ENCODE measurements at regions of chr10 and their contacts with region 1.

Region 1: GRCh38 chr10:99430451-99431189 is at the start of gene GOT1:
- DNase-seq: peak; percentile 92 to 98
- H3K4me3 ChIP-seq: peak within 1 kb of the TSS; percentile 72 to 96
- H3K27ac ChIP-seq: peak within 1 kb of the TSS; percentile 74 to 77
- H3K4me1 ChIP-seq: peaks cover 7 to 10% of the 10 kb centered on the region in 2 donors
- H3K27me3 ChIP-seq: no peaks in the 10 kb centered on the region
- CTCF ChIP-seq: no peak
- total RNA-seq, gene GOT1: 4.4 TPM

Region 2: GRCh38 chr10:98134431-98135221 is 1296.0 kb before region 1 on chr10 and contains the start of gene R3HCC1L:
- intact Hi-C with region 1: loop called (anchors 5 kb)
- DNase-seq: peak; percentile 60 to 95
- H3K4me3 ChIP-seq: peak within 1 kb of the TSS; percentile 69 to 92
- H3K27ac ChIP-seq: peak within 1 kb of the TSS; percentile 81 to 86
- H3K4me1 ChIP-seq: peaks cover 0 to 6% of the 10 kb centered on the region in 2 donors
- H3K27me3 ChIP-seq: no peaks in the 10 kb centered on the region
- CTCF ChIP-seq: peak in 1 of 3 experiments; percentile 4
- total RNA-seq, gene R3HCC1L: 3.1 TPM

Region 3: DNA sequence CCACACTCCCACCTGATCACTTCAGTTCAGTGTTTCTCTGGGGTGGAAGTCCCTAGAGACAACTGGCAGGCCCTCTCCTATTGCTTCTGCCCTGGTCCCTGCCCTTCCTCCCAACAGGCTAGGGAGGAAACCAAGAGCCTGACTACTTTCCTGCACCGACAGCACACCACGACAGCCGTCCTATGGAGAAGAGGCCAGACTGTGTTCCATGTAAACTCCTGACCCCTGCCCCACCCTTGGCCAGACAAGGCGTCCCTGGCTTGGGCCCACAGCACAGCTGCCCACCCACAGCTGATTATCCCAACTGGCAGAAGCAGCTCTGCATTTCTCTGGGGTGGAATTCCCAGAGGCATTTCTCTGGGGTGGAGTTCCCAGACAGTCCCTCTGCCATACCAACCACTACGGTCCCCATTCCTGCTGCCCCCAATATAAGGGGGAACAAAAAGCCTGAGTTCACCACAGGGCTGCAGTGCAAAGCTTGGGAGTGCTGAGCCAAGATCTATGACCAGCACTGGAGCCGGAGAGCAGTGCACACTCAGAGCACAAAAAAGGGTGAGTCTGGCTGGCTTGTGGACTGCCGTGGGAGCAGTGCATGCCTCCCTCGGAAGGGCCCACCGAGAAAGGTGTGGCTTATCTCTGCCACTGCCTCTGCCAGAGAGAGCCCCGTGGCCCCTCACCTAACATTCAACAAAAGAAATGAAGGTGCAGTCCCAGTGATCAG is 388.4 kb before region 1 on chr10:
- intact Hi-C with region 1: no loop called
- DNase-seq: no peak
- H3K4me3 ChIP-seq: no peak overlapping the region
- H3K27ac ChIP-seq: no peak overlapping the region
- H3K4me1 ChIP-seq: no peaks in the 10 kb centered on the region
- H3K27me3 ChIP-seq: no peaks in the 10 kb centered on the region
- CTCF ChIP-seq: no peak

Region 4: GRCh38 chr10:99234041-99234790 is 196.4 kb before region 1 on chr10:
- intact Hi-C with region 1: loop called (anchors 5 kb)
- DNase-seq: peak in 1 of 2 donors; percentile 69
- H3K4me3 ChIP-seq: peak overlapping the region; percentile 64 to 81
- H3K27ac ChIP-seq: peak overlapping the region; percentile 46 to 49
- H3K4me1 ChIP-seq: peaks cover 3 to 8% of the 10 kb centered on the region in 2 donors
- H3K27me3 ChIP-seq: peaks cover 5% of the 10 kb centered on the region
- CTCF ChIP-seq: no peak

Region 5: DNA sequence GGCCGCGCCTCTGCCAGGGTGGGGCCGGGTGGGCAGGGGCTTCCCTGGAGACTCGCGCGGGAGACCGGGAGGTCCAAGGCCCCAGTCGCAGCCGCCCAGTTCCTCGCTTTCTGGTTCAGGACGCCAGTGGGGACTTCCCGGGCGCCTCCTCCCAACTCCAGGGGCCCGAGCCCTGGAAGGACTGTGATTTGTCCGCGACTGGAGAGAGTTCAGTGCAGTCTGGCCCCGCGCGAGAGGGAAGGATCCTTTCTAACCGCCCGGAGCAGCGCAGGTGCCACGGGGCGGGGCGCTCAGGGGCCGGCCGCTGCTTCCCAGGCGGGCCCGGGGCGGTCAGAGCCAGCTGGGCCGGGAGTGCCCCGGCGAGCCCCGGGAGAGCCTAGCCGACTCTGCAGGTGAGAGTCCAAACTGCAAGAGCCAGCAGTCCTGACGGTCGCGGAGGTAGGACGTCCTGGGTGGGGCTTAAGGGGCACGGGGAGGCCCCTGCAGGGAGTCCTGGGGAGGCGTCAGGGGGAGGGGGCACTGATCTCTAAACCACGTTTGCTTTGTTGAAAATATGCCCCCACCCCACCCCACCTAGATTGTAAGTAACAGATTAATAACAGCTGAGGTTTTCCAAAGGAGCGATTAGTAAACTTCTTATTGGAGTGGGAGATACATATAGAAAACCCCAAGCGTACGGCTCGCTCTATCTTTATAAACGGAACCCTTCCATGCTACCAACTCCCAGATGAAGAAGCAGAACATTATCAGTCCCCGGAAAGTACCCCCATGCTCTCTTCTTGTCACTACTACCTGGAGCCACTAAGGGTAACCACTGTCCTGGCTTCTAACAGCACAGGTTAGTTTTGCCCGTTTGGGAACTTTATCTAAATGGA is 110.3 kb after region 1 on chr10:
- intact Hi-C with region 1: no loop called
- DNase-seq: no peak
- H3K4me3 ChIP-seq: peak overlapping the region in 1 of 2 donors; percentile 36
- H3K27ac ChIP-seq: no peak overlapping the region
- H3K4me1 ChIP-seq: peaks cover 0 to 5% of the 10 kb centered on the region in 2 donors
- H3K27me3 ChIP-seq: peaks cover 4% of the 10 kb centered on the region
- CTCF ChIP-seq: no peak

Region 6: DNA sequence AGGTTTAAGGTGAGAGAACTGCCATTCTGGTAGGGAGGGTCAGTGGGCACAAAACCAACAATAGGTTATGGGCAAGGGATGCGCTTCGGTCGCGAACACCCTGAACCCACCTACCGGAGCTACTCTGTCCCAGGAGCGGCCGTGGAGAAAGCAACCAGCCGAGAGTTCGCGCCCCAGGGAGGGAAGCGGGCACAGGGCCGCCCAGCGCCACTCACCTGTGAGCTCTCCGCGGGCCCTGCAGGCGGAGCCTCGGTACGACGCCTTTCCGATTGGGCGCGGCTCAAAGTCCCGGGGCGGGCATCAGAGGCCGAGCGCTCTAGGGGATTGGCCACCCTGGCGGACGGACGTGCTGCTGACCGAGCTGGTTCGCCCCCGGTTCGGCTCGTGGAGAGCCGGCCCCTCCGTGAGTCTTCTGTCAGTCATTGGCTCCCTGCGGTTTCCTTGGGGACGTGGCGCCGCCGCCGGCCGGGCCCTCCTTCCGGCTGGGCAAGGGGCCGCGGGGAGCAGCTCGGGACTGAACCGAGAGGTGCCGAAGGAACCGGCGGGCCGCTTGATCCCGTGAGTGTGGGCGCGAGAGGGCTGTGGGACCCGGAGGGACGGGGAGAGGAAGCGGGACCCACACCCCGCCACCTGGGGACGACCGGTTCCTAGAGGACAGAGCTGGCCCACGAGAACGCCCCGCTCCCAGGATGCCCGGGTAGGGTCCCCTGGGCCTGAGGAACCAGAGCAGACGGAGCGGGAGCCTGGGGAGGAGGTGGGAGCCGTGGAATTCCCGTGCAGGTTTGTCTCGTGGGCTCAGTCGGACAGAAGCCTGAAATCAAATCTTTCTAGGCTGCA is 228.6 kb after region 1 on chr10 and contains the start of gene ENTPD7:
- intact Hi-C with region 1: loop called (anchors 1 kb)
- DNase-seq: peak; percentile 79 to 95
- H3K4me3 ChIP-seq: peak within 1 kb of the TSS; percentile 71 to 84
- H3K27ac ChIP-seq: no peak within 1 kb of the TSS
- H3K4me1 ChIP-seq: peaks cover 0 to 7% of the 10 kb centered on the region in 2 donors
- H3K27me3 ChIP-seq: no peaks in the 10 kb centered on the region
- CTCF ChIP-seq: peak; percentile 18 to 45 (median 39)
- total RNA-seq, gene ENTPD7: 9.9 TPM

Measured in ascending aorta (tissue), 2 donors.